Activated naive CD4-positive, alpha-beta T cell treated with anti-CD3 and anti-CD28 coated beads for 36 hours (primary cell): ENCODE measurements at regions of chr12 and their contacts with region 1.

Region 1: DNA sequence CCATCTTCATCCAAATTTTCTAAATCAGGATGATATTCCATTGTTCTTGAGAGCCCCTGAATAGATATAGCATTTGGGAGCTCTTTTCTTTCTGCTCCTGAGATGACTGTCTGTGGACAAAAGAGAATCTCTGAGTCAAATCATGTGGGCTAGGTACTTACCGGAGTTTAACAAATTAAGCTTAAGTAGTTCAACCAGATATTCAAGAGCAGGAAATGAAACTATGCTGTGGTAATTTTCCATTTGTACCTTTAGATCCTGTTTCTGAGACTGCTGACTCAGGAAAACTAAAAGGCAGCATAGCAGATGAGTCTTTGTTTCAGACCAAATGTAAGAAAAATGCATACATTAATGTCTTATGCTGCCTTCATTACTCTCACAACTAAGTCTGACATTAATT is at the start of gene CLEC7A:
- DNase-seq: no peak
- H3K4me3 Mint-ChIP-seq: no peak within 1 kb of the TSS
- H3K27ac Mint-ChIP-seq: no peak within 1 kb of the TSS
- H3K4me1 Mint-ChIP-seq: peaks cover 16% of the 10 kb centered on the region
- H3K27me3 Mint-ChIP-seq: peaks cover 8% of the 10 kb centered on the region
- total RNA-seq, gene CLEC7A: not detected

Region 2: GRCh38 chr12:10033783-10034545 is 96.1 kb before region 1 on chr12:
- CTCF ChIA-PET with region 1: interaction called, 5 read pairs
- intact Hi-C with region 1: loop called (anchors 5 kb)
- DNase-seq: no peak
- H3K4me3 Mint-ChIP-seq: no peak overlapping the region
- H3K27ac Mint-ChIP-seq: no peak overlapping the region
- H3K4me1 Mint-ChIP-seq: no peaks in the 10 kb centered on the region
- H3K27me3 Mint-ChIP-seq: no peaks in the 10 kb centered on the region

Region 3: GRCh38 chr12:10147714-10148403 is 17.8 kb after region 1 on chr12:
- CTCF ChIA-PET with region 1: interaction called, 5 read pairs
- intact Hi-C with region 1: loop called (anchors 1 kb)
- DNase-seq: no peak
- H3K4me3 Mint-ChIP-seq: no peak overlapping the region
- H3K27ac Mint-ChIP-seq: no peak overlapping the region
- H3K4me1 Mint-ChIP-seq: peaks cover 10% of the 10 kb centered on the region
- H3K27me3 Mint-ChIP-seq: peaks cover 8% of the 10 kb centered on the region